GM12878 (cell line): ENCODE measurements at regions of chr5 and their contacts with region 1.

Region 1: DNA sequence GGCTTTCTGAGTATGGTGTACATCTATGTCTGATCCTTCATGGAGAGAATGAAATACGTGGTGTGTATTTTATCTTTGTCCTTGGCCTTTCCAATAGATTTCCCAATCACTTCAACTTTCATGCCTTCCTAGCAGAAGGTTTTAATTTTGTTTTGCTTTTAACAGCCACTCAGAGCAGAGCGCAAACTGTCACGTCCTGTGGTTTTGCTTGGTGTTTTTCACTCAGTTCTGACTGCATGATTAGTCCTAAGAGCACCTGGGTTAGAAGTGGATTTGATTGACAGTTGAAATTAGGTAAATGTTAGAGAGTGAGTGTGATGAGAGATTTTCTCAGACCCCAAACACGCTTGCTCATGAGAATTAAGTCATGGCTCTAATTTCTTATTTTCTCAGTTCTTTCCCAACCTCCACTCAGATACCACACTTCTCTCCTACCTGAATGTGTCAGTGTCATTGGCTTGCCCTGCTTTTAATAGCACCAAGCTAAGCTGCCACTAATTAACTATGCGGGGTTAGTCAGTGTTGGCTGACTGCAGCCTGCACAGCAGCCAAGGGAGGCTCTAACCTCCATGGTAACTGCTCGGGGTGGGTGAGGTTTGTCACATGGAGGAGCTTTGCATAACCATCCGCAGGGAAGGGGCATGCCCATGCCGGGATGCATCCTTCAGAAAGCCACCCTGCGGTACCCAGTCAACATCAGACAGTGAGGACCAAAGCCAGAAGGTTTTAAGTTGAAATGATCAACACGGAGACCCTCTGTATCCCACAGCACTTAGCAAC is 173.4 kb downstream of the NR3C1 start:
- DNase-seq: peak; percentile 99
- ATAC-seq: peak; percentile 89
- H3K4me3 ChIP-seq: peak overlapping the region; percentile 34; the same call in 1 of the 2 replicates
- H3K27ac ChIP-seq: peak overlapping the region; percentile 90
- H3K4me1 ChIP-seq: peaks cover 29% of the 10 kb centered on the region
- H3K27me3 ChIP-seq: no peaks in the 10 kb centered on the region
- CTCF ChIP-seq: no peak
- EP300 ChIP-seq: peak; percentile 74 to 88; a peak in 2 of 4 replicates
- POLR2A ChIP-seq: peak; percentile 56; the same call in 1 of the 2 replicates
- RAD21 ChIP-seq: peak; percentile 50; the same call in 1 of the 2 replicates

Region 2: GRCh38 chr5:143057580-143057999 is 172.5 kb before region 1 on chr5:
- CTCF ChIA-PET with region 1: no interaction called
- POLR2A ChIA-PET with region 1: interaction called, 3 read pairs
- RAD21 ChIA-PET with region 1: interaction called, 13 read pairs
- SMC1A ChIA-PET with region 1: interaction called, 4 read pairs
- in situ Hi-C with region 1: no loop called
- intact Hi-C with region 1: loop called (anchors 1 kb)
- DNase-seq: peak; percentile 85
- ATAC-seq: peak; percentile 59
- H3K4me3 ChIP-seq: peak overlapping the region; percentile 77
- H3K27ac ChIP-seq: peak overlapping the region; percentile 100
- H3K4me1 ChIP-seq: peaks cover 56% of the 10 kb centered on the region
- H3K27me3 ChIP-seq: no peaks in the 10 kb centered on the region
- CTCF ChIP-seq: no peak
- EP300 ChIP-seq: peak; percentile 77 to 89; a peak in 3 of 4 replicates
- POLR2A ChIP-seq: peak; percentile 54; the same call in 1 of the 2 replicates
- RAD21 ChIP-seq: peak; percentile 36; the same call in 1 of the 2 replicates

Region 3: DNA sequence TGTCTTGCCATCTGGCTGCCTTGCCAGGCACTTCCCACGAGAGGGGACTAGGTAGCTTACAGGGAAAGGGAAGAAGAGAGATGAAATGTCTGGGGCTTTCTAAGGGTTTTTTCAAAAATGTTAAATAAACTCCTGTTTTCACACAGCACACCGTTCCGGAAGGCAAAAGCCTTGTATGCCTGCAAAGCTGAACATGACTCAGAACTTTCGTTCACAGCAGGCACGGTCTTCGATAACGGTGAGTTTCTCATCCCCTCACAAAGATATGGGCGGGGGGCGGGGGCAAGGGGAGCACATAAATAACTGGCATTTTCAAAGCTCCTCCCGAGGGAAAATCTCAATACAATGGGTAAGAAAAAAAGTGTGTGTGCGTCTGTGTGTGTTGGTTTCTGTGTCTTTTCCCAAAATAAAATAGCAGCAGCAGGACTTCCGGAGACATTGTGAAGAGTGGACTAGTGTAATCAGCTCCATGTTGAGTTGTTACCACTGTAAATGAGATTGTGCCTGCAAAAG is 16.2 kb before region 1 on chr5:
- CTCF ChIA-PET with region 1: interaction called, 77 read pairs
- POLR2A ChIA-PET with region 1: interaction called, 114 read pairs
- RAD21 ChIA-PET with region 1: interaction called, 482 read pairs
- SMC1A ChIA-PET with region 1: interaction called, 423 read pairs
- in situ Hi-C with region 1: no loop called
- intact Hi-C with region 1: loop called (anchors 1 kb)
- DNase-seq: peak; percentile 97
- ATAC-seq: peak; percentile 68
- H3K4me3 ChIP-seq: peak overlapping the region; percentile 6; the same call in 1 of the 2 replicates
- H3K27ac ChIP-seq: peak overlapping the region; percentile 100
- H3K4me1 ChIP-seq: peaks cover 76% of the 10 kb centered on the region
- H3K27me3 ChIP-seq: no peaks in the 10 kb centered on the region
- CTCF ChIP-seq: peak; percentile 38 to 61 (median 47); a peak in 5 of 6 replicates
- EP300 ChIP-seq: peak; percentile 73 to 82
- POLR2A ChIP-seq: peak; percentile 45
- RAD21 ChIP-seq: peak; percentile 76

Region 4: GRCh38 chr5:143290125-143290524 is 60.0 kb after region 1 on chr5:
- CTCF ChIA-PET with region 1: no interaction called
- POLR2A ChIA-PET with region 1: interaction called, 8 read pairs
- RAD21 ChIA-PET with region 1: interaction called, 18 read pairs
- SMC1A ChIA-PET with region 1: interaction called, 46 read pairs
- in situ Hi-C with region 1: no loop called
- intact Hi-C with region 1: no loop called
- DNase-seq: no peak
- ATAC-seq: peak; percentile 45; the same call in 2 of the 3 replicates
- H3K4me3 ChIP-seq: no peak overlapping the region
- H3K27ac ChIP-seq: no peak overlapping the region
- H3K4me1 ChIP-seq: no peaks in the 10 kb centered on the region
- H3K27me3 ChIP-seq: no peaks in the 10 kb centered on the region
- CTCF ChIP-seq: no peak
- EP300 ChIP-seq: no peak
- POLR2A ChIP-seq: no peak
- RAD21 ChIP-seq: no peak

Region 5: GRCh38 chr5:143403593-143404415 is 173.7 kb after region 1 on chr5 and contains the start of gene NR3C1:
- CTCF ChIA-PET with region 1: interaction called, 3 read pairs
- POLR2A ChIA-PET with region 1: interaction called, 14 read pairs
- RAD21 ChIA-PET with region 1: interaction called, 67 read pairs
- SMC1A ChIA-PET with region 1: interaction called, 25 read pairs
- in situ Hi-C with region 1: no loop called
- intact Hi-C with region 1: loop called (anchors 5 kb)
- DNase-seq: no peak
- ATAC-seq: peak; percentile 51
- H3K4me3 ChIP-seq: peak within 1 kb of the TSS; percentile 83
- H3K27ac ChIP-seq: peak within 1 kb of the TSS; percentile 99
- H3K4me1 ChIP-seq: no peaks in the 10 kb centered on the region
- H3K27me3 ChIP-seq: no peaks in the 10 kb centered on the region
- CTCF ChIP-seq: peak; percentile 38 to 76 (median 64); a peak in 5 of 6 replicates
- EP300 ChIP-seq: peak; percentile 25 to 38; a peak in 2 of 4 replicates
- POLR2A ChIP-seq: peak; percentile 78
- RAD21 ChIP-seq: peak; percentile 67
- polyA plus RNA-seq, gene NR3C1: 89.0 to 119 TPM

Region 6: DNA sequence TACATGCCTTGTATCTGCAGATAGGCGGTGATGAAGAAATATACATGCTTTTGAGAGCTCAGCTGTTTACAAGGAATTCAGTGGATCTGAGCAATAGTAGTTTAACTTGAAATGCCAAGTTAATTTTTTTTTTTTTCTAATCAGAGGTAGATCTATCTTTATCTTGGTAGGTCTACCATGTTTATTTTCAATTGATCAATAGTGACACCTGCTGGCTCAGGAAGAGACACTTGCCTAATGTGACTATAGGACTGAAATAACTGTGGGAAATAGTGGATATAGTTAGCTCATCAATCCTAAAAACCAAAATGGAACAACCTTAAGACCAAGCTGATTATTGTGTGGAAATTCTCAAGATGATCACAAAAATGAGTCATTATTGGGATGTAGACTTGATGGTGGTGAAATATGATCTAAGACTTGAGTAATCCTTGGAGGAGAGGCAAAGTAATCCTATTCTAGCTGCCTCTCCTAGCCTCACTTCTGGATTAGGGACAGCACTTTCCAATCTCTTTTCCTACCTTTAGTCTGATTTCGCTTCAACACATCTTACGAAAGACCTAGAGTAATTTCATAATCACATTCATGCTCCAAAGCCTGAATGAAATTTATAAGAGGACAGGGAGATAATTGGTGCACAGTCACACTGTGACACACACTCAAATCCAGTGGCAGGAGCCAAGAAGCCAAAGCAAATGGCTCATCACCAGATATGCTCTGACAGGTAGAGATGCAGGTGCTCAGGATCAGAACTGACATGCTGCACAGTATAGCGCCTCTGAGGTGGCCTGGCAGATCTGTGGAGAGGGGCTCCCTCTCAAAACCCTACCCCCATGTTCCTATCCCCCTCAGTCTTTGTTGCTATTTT is 738.2 kb after region 1 on chr5:
- CTCF ChIA-PET with region 1: no interaction called
- POLR2A ChIA-PET with region 1: no interaction called
- RAD21 ChIA-PET with region 1: no interaction called
- SMC1A ChIA-PET with region 1: interaction called, 3 read pairs
- in situ Hi-C with region 1: no loop called
- intact Hi-C with region 1: loop called (anchors 10 kb)
- DNase-seq: peak; percentile 34
- ATAC-seq: peak; percentile 86
- H3K4me3 ChIP-seq: no peak overlapping the region
- H3K27ac ChIP-seq: no peak overlapping the region
- H3K4me1 ChIP-seq: no peaks in the 10 kb centered on the region
- H3K27me3 ChIP-seq: no peaks in the 10 kb centered on the region; a peak in 1 of 4 replicates
- CTCF ChIP-seq: peak; percentile 46 to 63 (median 56); a peak in 5 of 6 replicates
- EP300 ChIP-seq: no peak
- POLR2A ChIP-seq: no peak
- RAD21 ChIP-seq: peak; percentile 69